ENCODE measurements at regions of chr1 and their contacts with region 1.

Region 1: GRCh38 chr1:64242895-64243756 is 39.7 kb downstream of the UBE2U start:
- DNase-seq: no peak

Region 2: DNA sequence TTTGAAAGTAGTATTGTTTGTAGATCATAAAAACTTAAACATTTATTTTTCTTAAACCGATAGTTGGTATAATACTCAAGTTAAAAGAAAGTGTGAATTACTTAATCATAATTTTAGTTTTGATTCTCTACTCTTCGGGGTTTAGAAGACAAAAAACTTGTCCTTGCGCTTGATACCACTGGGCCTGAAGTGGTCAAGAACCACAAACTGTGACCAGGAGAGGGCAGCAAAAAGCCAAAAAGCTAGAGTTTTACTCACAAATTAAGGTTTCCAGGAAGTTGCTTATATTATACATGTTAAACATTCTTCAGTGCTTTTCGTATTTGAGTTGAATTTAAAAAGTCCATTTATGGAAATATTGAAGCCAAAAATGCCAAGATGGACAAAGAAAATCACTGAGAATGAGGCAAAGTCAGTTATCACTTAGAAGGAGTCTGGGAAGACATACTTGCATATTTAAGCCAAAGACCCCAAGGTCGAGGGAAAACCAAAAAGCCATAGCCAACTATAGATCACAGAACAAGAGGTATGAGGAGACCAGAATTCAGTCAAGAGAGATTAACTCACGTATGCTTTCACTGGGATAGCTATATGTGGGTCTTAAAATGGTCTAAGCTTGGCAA is 685.6 kb before region 1 on chr1:
- intact Hi-C with region 1: loop called (anchors 5 kb)
- DNase-seq: no peak

Region 3: DNA sequence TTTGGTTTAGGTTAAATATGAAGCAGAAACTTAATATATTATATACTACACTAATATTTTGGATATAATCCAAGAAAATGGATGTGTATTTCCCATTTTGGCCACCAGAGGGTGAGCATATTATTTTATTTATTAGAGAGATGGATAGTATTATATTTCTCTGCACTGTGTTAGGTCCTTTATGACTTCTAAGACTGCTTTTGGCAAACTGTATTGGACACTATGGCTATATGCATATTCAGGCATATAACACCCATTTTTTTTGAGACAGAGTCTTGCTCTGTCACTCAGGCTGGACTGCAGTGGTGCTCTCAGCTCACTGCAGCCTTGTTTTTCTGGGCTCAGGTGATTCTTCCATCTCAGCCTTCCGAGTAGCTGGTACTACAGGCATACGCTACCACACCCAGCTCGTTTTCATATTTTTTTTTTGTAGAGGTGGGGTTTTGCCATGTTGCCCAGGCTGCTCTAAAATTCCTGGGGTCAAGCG is 667.7 kb before region 1 on chr1:
- intact Hi-C with region 1: loop called (anchors 2 kb)
- DNase-seq: no peak

Region 4: DNA sequence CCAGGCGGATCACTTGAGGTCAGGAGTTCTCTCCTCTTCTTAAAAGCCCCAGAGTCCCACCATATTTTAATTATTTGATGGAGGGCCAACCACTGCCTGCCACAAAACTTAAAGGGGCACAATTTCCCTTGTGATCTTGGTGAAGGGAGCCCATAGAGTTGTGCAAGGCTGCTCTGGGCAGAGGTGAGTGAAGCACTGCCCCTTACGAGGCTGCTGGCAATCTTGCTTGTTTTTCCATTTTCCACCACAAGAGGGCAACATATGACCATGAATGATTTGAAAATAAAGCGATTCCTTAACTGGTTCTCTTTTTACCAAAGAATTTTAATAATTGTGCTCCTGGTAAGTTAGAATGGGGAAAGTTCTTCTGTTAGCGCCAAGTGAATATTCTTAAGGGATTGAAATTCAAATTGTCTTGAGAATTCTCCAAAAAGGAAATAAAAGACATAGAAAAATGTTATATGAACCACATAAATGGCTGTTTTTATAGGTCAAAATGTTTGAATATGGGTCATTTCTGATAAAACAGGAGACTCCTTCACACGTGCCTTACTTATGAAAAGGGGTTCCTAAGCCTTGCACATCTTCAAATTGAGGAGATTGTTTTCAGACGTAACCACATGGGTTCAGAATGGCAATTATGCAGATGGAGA is 627.2 kb before region 1 on chr1:
- intact Hi-C with region 1: loop called (anchors 2 kb)
- DNase-seq: no peak

Region 5: DNA sequence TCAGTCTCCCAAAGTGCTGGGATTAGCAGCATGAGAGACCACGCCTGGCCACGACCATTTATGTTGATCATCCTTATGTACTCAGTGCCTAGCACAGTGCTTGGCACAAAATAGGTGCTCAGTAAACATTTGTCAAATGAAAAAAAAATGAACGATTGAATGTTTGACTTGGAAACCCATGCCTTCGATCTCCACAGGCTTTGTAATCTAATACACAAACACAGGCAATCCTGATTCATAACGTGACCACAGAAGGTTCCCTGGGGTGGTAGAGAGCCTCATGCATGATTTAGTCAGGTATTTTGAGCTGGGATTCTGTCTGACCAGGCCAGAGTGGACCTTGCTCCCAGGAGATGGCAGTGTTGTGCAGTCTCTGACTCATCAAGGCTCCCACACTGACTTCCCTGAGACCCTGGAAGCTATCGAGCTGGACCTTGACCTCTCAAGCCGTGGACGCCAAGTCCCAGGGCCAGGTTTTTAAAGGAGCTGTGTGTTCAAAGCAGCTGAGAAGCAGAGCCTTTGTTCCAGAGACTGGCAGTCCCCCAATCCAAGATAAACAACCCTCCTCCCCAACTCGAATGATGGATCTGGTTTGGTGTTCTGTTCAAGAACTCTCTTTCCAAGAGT is 568.8 kb before region 1 on chr1:
- intact Hi-C with region 1: loop called (anchors 2 kb)
- DNase-seq: no peak

Region 6: DNA sequence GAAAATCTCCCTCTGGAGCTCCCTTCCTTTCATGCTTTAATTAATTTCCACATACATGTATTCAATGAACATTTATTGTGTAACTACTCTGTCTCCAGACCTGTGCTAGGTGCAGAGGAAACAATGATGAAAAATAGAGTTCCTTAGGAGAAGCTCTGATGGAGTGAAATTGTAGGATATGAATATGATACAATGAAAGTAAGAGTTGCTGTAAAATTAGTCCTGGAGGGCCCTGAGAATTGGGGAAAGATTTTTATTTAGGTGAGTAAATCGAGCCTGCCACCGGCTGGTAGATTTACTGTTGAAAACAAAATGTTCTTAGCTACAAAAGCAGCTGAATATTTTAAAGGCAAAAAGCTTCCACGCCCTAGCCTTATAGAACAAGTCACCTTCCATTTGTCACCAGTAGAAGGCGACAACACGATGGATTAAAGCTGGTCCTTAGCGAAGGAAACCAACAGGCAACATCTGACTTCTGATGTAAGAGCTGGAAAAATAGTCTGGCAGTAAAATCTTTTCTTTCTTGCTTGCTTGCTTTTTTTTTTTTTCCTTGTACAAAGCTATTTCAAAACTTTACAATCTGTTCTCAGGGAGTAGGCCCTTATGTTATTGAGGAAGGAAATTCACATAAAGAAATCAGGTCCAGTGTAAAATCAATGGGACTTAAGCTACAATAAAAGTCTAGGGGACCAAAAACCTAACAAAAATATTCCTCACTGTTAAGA is 551.3 kb before region 1 on chr1:
- intact Hi-C with region 1: loop called (anchors 5 kb)
- DNase-seq: no peak

Region 7: GRCh38 chr1:64107118-64107519 is 136.0 kb before region 1 on chr1:
- intact Hi-C with region 1: no loop called
- DNase-seq: no peak

Measured in cardiac septum (tissue), 1 donor.